Activated T-helper 1 cell treated with anti-CD3 and anti-CD28 coated beads, Interleukin-12 subunit alpha, Interleukin-12 subunit beta, Interleukin-2, Interleukin-4 antibody, amounts not matched to agents 30 ng/mL and 10 ng/mL and 1 ng/mL, durations not matched to agents 14 hours and 24 hours and 36 hours (primary cell): ENCODE measurements at regions of chr2 and their contacts with region 1.

Region 1: GRCh38 chr2:147628971-147629421 is 215.8 kb upstream of the ACVR2A start:
- DNase-seq: no peak
- H3K4me3 Mint-ChIP-seq: peak overlapping the region; percentile 35
- H3K27ac Mint-ChIP-seq: peak overlapping the region; percentile 60
- H3K4me1 Mint-ChIP-seq: peaks cover 24% of the 10 kb centered on the region
- H3K27me3 Mint-ChIP-seq: no peaks in the 10 kb centered on the region

Region 2: DNA sequence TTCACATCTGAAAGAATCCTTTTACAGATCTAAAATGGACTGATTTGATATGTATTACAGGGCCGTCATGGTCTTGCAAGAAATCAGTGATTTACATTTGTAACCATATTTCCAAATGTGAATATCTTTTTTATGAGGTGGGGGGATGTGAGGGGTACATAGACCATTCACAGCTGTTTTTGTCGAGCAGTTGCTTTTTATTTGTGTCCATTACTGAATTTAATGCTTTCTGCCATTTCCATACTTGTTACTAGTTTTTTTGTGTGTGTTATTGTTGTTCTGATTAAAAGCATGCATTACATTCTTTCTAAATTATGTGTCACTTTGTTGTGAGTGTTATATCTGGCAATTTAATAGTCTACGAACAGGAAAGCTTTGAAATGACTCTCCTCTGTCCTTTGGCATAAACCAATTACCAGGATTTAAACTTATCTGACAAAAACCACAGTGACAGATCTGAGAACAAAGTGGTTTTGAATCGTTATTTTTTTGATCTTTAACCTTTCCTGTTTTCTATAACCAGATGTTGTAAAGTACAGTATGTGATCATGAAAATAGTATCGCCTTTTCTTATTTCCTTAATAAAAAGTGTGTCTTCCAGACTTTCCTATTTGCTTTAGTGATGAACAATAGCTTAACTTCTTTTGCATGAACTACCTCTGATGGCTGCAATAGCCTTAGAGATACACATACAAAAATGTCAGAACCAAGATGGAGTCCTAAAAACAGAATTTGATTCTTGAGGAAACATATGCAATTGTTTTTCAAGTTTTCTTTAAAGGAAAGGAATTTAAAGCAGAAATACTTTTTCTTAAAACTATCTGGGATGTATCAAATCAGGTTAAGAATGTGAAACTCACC is 138.4 kb before region 1 on chr2:
- intact Hi-C with region 1: loop called (anchors 5 kb)
- DNase-seq: no peak
- H3K4me3 Mint-ChIP-seq: no peak overlapping the region
- H3K27ac Mint-ChIP-seq: peak overlapping the region; percentile 50
- H3K4me1 Mint-ChIP-seq: peaks cover 22% of the 10 kb centered on the region
- H3K27me3 Mint-ChIP-seq: peaks cover 4% of the 10 kb centered on the region

Region 3: DNA sequence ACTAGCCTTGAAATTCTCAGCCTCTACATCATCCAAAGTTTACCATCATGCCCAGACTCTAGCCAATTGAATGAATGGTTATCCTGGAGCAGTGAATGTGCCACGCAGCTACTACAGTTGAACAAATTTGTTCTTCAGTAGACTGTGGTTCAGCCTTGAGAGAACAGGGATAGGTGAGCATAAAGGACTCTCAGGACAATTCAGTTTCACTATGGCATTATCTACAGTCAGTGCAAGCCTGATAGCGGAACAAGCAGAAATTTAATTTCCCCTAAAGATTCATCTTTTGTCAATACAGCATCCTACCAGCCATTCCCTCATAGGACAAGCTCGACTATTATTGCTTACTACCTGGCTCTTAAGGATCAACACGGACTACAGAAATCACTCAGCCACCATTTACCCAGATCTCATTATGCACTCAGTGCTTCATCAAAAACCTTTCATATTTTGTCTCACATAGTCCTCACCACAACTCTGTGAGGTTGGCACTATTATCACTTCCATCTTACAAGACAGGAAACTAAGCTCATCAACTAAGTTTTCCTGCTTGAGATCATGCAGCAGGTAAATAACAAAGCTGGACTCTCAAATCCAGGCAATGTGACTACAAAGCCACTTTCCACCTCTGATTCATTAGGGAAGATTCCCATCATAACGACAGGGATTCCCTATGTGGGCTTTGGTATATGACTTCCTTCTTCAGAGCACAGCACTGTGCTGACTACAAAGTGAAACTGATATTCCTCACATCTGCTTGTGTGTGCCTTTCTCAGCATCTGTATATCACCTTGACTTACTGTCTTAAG is 34.4 kb after region 1 on chr2:
- intact Hi-C with region 1: loop called (anchors 1 kb)
- DNase-seq: peak; percentile 17
- H3K4me3 Mint-ChIP-seq: peak overlapping the region; percentile 46
- H3K27ac Mint-ChIP-seq: peak overlapping the region; percentile 69
- H3K4me1 Mint-ChIP-seq: peaks cover 24% of the 10 kb centered on the region
- H3K27me3 Mint-ChIP-seq: no peaks in the 10 kb centered on the region

Region 4: DNA sequence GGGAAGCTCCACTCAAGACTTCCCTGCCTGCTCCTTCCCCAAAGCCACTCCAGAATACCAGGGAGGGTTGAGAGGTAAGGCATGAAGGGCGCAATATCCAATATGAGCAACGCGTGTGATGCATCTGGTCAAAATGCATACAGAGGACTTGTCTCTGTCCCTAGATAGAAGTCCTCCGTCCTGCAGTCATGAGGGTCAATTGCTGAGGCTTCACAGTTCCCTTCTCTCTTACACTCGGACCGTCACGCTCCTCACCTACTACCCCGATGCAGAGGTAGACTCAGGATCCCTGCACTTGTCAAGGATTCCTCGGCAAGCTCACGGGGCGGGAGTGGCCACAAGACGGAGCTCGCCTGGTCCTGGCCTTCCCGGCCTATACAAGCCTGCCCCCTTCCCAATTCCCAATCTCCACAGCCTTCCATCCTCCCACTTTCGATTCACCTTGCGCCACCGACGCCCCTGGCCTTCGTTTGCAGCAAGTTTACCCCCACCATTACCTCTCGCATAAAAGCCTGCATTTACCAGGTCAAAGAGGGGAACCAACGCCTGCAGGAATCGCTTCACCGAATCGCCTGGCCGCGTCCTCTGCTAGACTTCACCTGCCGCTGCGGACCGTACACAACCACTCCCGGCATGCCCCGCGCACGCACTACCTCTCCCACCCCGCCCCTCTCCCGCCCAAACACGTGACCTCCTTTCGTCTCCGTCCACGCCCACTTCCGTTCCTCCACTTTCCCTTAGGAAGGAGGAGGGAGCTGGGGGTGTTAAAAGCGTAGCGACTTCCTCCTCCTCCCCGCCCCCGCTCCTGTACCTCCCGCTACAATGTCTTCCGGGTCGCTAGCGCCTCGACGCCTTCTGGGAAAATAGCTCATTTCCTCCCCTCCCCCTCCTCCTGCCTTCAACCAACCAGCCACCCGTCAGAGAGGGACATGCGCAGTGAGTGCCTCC is 391.4 kb after region 1 on chr2 and contains the start of gene ORC4:
- intact Hi-C with region 1: loop called (anchors 5 kb)
- DNase-seq: peak; percentile 95
- H3K4me3 Mint-ChIP-seq: peak within 1 kb of the TSS; percentile 98
- H3K27ac Mint-ChIP-seq: peak within 1 kb of the TSS; percentile 95
- H3K4me1 Mint-ChIP-seq: peaks cover 40% of the 10 kb centered on the region
- H3K27me3 Mint-ChIP-seq: no peaks in the 10 kb centered on the region
- total RNA-seq, gene ORC4: 29.2 and 34.2 TPM in 2 replicates